Right ventricle myocardium inferior (tissue), 1 donor: ENCODE measurements at regions of chr4 and their contacts with region 1.

Region 1: GRCh38 chr4:12488672-12489071 is 995.5 kb downstream of the RAB28 start:
- DNase-seq: peak; percentile 60
- ATAC-seq: peak; percentile 98

Region 2: GRCh38 chr4:12172198-12172973 is 316.3 kb before region 1 on chr4:
- intact Hi-C with region 1: loop called (anchors 5 kb)
- DNase-seq: no peak
- ATAC-seq: peak; percentile 83

Region 3: GRCh38 chr4:12231098-12231497 is 257.6 kb before region 1 on chr4:
- intact Hi-C with region 1: loop called (anchors 5 kb)
- DNase-seq: no peak
- ATAC-seq: peak; percentile 90

Region 4: GRCh38 chr4:12389604-12390003 is 99.1 kb before region 1 on chr4:
- intact Hi-C with region 1: loop called (anchors 5 kb)
- DNase-seq: no peak
- ATAC-seq: peak; percentile 80

Region 5: GRCh38 chr4:12562021-12562420 is 73.3 kb after region 1 on chr4:
- intact Hi-C with region 1: loop called (anchors 5 kb)
- DNase-seq: no peak
- ATAC-seq: no peak

Region 6: GRCh38 chr4:12633053-12633651 is 144.5 kb after region 1 on chr4:
- intact Hi-C with region 1: loop called (anchors 5 kb)
- DNase-seq: peak; percentile 79
- ATAC-seq: peak; percentile 85